Common myeloid progenitor, CD34-positive (primary cell): ENCODE measurements at regions of chr18 and their contacts with region 1.

Region 1: DNA sequence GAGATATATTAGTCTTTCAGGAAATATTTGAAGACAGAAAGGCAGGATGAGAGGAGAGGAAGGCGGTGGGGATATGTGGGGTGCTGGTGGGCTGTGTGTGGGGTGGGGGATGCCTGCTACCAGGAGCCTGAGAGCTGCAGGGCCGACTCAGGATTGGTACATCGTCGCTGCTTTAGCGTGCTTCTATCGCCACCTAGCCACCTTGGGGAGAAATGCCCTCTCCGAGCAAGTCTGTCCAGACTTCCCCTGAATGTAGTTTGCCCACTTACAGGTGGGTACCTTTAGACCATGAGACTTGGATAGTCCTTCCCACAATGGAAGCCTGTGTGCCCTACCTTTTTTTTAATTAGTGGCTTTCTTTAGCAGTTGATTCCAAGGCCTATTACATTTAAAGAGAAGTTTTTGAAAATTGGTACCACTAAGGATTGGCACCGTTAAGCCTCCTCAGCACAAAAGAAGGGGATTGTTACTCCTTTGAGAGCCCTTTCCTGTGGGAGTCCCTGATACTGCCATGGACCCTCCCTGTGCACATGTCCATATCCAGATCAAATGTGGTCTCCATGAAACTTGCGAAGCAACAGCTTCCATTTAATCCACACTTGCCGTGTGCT is 114.1 kb upstream of the NDUFV2 start:
- DNase-seq: peak; percentile 52 to 74 (median 63)
- H3K4me3 ChIP-seq: no peak overlapping the region
- H3K27ac ChIP-seq: no peak overlapping the region
- H3K4me1 ChIP-seq: no peaks in the 10 kb centered on the region
- H3K27me3 ChIP-seq: peaks cover 0 to 7% (median 0%) of the 10 kb centered on the region in 5 experiments

Region 2: DNA sequence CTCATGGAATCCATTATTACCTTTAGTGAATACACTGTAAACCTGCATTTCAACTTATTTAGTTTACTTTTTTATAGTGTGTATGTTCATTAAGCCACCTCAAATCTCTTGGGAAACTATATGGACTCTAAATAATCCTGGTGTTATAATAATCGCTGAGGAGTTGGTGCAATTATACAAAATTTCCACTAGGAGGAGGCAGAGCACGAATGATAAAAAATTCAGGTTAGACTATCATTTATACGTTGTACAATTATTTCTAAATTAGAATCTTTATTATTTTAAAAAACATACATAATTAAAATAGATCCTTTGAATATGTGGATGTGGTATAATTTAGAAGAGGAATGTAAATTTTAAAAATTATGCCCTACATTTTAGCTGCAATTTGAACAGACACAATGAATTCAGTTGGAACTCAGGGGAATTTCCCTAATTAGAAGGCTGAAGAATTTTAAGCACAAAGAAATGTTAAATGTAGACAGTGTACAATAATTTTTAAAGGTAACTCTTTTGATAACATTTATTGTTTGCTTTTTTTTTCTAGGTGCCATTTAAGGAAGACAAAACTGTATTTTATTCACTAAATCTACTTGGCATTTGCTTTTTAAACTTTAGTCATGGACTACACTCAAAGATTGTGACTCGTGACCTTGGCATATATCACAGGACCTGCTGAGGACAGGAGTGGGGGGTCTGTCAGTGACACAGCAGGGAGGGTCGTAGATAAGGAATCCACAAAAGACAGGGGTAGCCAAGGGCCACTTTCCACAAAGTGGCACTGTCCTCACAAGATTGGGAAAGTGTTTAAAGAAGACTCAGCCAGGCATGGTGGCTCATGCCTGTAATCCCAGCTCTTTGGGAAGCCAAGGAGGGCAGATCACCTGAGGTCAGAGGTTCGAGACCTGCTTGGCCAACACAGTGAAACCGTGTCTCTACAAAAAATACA is 333.6 kb before region 1 on chr18:
- CTCF ChIA-PET with region 1: interaction called, 13 read pairs
- POLR2A ChIA-PET with region 1: no interaction called
- DNase-seq: peak; percentile 11 to 47 (median 34)
- H3K4me3 ChIP-seq: no peak overlapping the region
- H3K27ac ChIP-seq: no peak overlapping the region
- H3K4me1 ChIP-seq: no peaks in the 10 kb centered on the region
- H3K27me3 ChIP-seq: no peaks in the 10 kb centered on the region

Region 3: DNA sequence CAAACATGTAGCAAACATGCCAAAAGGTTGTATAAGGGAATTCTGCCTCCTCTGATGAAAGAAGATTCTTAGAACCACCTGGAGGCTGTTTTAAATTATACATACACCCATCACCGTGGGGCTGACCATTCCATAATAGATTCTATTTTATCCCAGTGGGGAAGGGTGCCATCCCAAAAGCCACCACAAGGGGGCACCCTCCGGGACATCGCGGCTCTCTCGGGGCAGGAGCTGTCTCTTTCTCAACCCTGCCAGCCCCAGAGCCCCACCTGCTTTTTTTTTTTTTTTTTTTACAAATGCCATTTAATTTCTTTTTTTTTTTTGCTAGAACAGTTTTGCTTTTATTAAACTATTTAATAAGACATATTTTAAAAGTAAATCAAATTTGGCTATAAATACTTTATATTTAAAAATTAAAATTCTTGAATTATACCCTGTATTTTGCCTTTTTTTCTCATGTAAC is 291.6 kb before region 1 on chr18:
- CTCF ChIA-PET with region 1: interaction called, 57 read pairs
- POLR2A ChIA-PET with region 1: no interaction called
- DNase-seq: peak; percentile 56 to 70 (median 69)
- H3K4me3 ChIP-seq: no peak overlapping the region
- H3K27ac ChIP-seq: no peak overlapping the region
- H3K4me1 ChIP-seq: no peaks in the 10 kb centered on the region
- H3K27me3 ChIP-seq: peaks cover 0 to 12% (median 2%) of the 10 kb centered on the region in 5 experiments

Region 4: DNA sequence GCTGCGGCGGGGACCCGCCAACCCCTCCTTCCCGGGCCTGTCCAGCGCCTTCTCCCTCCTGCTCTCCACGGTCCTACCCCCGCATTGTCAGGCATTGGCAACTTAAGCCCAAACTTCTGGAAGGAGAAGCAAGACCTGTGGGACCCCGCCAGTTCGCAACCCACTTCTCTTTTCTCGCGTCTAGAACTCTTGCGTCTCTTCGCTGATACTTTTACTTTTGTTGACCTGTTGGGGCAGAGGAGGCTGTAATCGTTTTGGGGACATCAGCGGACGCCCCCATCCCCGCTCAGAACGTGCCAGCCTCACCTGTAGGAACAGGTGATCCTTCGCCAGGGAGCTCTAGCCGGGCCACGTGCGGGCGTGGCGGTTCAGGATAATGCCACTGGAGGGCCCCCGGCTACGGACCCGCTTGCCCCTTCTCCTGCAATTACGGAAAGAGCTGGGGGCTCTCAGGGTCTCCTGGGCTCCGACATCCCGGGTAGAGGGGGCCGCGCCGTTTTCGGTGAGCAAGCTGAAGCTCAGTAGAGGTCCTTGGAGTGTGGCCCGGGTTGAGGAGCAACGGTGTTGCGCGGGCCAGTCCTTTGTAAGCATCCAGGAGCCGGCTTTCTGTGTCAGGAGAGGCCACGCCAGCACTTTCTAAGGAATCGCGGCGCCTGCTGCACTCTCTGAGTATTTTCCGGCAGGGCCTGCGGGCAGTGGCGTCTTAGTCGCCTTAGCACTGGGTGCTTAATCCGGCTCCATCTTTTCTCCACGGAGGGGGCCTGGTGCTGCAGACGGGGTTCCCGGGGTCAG is 281.4 kb before region 1 on chr18:
- CTCF ChIA-PET with region 1: interaction called, 12 read pairs
- POLR2A ChIA-PET with region 1: no interaction called
- DNase-seq: peak; percentile 14 to 68 (median 67)
- H3K4me3 ChIP-seq: peak overlapping the region in 6 of 7 experiments; percentile 10 to 83 (median 54)
- H3K27ac ChIP-seq: no peak overlapping the region
- H3K4me1 ChIP-seq: peaks cover 0 to 35% (median 29%) of the 10 kb centered on the region in 4 experiments
- H3K27me3 ChIP-seq: peaks cover 3 to 65% (median 29%) of the 10 kb centered on the region in 5 experiments

Region 5: DNA sequence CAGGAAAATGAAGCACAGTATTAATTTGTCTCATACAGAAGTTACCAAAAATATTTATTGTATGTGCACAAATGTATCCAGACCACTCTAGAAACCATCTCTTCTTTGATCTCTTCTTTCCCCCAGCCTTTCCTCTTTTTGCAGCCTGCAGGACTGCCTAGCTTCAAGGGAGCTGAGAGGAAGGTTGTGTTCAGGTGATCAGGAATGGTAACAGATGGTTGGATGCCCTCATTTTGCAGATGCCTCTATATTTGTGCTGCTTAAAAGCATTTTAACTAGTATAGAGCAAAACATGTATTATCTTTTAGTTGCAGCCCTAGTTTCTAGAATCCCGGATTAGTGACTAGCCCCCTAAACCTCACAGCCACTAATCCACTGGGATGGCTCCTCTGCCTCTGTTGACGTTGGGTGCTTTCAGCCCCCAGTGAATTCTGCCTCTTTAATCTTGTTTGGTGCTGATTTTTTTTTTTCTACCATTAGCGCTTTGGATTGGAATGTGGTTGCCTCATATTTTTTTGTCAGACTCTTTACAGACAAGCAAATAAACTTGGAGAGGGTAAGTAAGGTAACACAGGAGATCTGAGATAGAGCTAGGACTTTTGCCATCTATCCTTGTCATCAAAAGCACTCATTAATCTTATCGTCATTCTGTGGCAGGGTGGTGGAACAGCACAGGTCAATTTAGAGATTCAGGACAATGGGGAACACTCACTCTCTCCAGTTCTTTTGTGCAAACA is 10.3 kb after region 1 on chr18:
- CTCF ChIA-PET with region 1: interaction called, 15 read pairs
- POLR2A ChIA-PET with region 1: no interaction called
- DNase-seq: no peak
- H3K4me3 ChIP-seq: no peak overlapping the region
- H3K27ac ChIP-seq: peak overlapping the region in 1 of 2 experiments; percentile 36
- H3K4me1 ChIP-seq: no peaks in the 10 kb centered on the region
- H3K27me3 ChIP-seq: peaks cover 0 to 3% (median 0%) of the 10 kb centered on the region in 5 experiments